GM10248 (cell line): ENCODE measurements at regions of chr1 and their contacts with region 1.

Region 1: GRCh38 chr1:160951443-160952128 is 3.0 kb downstream of the ITLN2 start:
- DNase-seq: peak; percentile 80
- CTCF ChIP-seq: peak; percentile 87

Region 2: GRCh38 chr1:160681067-160681890 is 270.3 kb before region 1 on chr1:
- CTCF ChIA-PET with region 1: interaction called, 64 read pairs
- POLR2A ChIA-PET with region 1: no interaction called
- DNase-seq: peak; percentile 55
- CTCF ChIP-seq: peak; percentile 93

Region 3: DNA sequence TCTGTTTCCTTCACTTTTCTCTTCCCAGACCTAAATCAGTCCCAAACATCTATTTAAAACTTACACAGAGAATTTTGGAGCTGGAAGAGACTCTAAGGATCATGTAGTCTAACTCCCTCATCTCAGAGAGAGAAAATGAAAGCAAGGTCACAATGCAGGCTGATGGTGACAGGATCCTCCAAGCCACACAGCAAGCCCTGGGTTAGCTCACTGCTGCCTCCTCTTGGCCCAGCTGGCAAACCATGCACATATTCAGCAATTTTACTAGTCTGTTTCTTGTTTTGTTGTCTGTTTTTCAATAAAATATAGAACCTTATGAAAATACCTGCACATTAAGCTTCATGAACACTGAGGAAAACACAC is 183.3 kb before region 1 on chr1:
- CTCF ChIA-PET with region 1: interaction called, 25 read pairs
- POLR2A ChIA-PET with region 1: no interaction called
- DNase-seq: peak; percentile 77
- CTCF ChIP-seq: peak; percentile 93

Region 4: DNA sequence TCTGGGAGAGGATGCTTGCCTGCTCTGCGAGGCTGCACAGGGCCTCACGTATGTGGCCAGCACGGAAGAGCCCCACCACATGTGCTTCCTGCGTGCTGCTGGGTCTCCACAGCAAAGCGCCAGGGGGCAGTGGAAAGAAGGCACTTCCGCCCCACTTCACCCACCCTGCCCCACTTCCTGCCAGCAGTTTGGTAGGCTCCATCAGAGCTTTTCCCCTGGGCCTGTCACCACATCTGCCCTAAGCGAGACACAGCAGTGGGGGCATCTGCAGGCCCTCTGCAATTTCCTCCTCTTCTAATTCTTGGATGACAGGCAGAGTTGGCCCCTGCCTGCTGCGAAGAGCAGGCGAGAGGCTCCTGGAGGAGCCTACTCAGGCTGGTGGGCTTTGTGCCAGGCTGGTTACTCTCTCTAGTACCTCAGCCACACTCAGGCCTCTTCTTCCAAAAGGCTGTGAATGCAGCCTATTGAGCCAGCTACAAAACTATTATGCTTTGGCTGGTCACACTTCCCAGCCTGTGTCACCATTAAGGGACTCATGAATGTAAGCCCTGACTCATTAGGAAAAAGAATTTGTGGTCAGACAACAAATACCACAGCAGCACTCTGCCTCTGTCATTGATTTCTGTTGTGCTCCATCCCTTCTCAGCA is 113.9 kb before region 1 on chr1:
- CTCF ChIA-PET with region 1: interaction called, 227 read pairs
- POLR2A ChIA-PET with region 1: no interaction called
- DNase-seq: peak; percentile 73
- CTCF ChIP-seq: peak; percentile 41

Region 5: GRCh38 chr1:160907976-160908375 is 43.6 kb before region 1 on chr1:
- CTCF ChIA-PET with region 1: interaction called, 12 read pairs
- POLR2A ChIA-PET with region 1: no interaction called
- DNase-seq: no peak
- CTCF ChIP-seq: no peak

Region 6: DNA sequence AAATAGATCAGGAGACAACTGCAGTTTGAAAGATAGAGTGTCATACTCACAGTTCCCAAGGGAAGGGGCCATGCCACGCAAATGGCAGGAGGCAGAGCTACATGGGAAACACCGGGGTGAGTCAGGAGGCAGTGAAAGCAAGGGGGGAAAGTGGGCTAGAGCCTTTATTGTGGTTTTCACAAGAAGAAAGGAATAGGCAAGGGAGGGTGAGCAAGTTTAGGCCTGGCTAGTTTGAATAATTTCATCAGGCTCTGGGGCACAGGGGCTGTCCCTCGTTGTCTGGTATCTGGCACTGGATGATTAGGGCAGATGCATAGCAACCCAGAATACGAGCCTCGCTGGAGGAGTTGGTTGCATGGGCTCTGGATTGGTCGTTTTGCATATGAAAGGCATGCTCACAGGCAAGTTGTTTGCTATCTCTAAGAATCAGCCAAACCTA is 20.1 kb after region 1 on chr1:
- CTCF ChIA-PET with region 1: interaction called, 22 read pairs
- POLR2A ChIA-PET with region 1: no interaction called
- DNase-seq: no peak
- CTCF ChIP-seq: no peak

Region 7: DNA sequence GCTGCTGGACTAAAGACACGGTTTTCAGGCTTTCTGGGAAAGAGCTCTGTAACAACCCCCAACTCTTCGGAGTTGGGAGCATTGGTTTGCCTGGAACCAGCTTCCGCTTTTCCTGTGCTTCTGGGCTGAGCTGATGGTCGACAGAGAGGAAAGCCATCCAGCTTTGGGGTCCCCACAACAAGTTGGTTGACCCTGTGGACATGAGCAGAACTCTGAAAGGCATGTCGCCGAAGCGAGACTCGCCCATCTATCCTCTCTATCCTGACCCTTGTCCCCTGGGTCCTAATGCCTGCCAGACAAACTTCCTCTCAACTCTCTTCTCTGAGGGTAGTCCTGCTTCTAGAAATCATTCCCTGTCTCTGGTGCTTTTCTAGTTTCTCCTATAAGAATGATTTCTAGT is 521.8 kb after region 1 on chr1:
- CTCF ChIA-PET with region 1: no interaction called
- POLR2A ChIA-PET with region 1: no interaction called
- DNase-seq: no peak
- CTCF ChIP-seq: no peak